ENCODE measurements at regions of chr14 and their contacts with region 1.

Region 1: GRCh38 chr14:22375321-22375930 is 213.6 kb downstream of the DAD1 start:
- DNase-seq: peak; percentile 21
- H3K4me3 ChIP-seq: no peak overlapping the region
- H3K27ac ChIP-seq: no peak overlapping the region
- H3K4me1 ChIP-seq: 0 out of 4 replicates have a peak, but pooled peaks cover 0 to 9% of the 10 kb centered on the region in 2 experiments
- H3K27me3 ChIP-seq: peaks cover 5% of the 10 kb centered on the region; the same call in 1 of the 2 replicates
- CTCF ChIP-seq: peak; percentile 71
- EP300 ChIP-seq: no peak
- RAD21 ChIP-seq: peak; percentile 49

Region 2: GRCh38 chr14:22314181-22314820 is 61.1 kb before region 1 on chr14:
- CTCF ChIA-PET with region 1: interaction called, 24 read pairs
- POLR2A ChIA-PET with region 1: no interaction called
- DNase-seq: peak; percentile 43
- H3K4me3 ChIP-seq: no peak overlapping the region
- H3K27ac ChIP-seq: no peak overlapping the region
- H3K4me1 ChIP-seq: no peaks in the 10 kb centered on the region
- H3K27me3 ChIP-seq: peaks cover 4% of the 10 kb centered on the region; the same call in 1 of the 2 replicates
- CTCF ChIP-seq: peak; percentile 75
- EP300 ChIP-seq: no peak
- RAD21 ChIP-seq: peak; percentile 61

Region 3: GRCh38 chr14:22319526-22320361 is 55.7 kb before region 1 on chr14:
- CTCF ChIA-PET with region 1: interaction called, 24 read pairs
- POLR2A ChIA-PET with region 1: no interaction called
- DNase-seq: peak; percentile 30
- H3K4me3 ChIP-seq: peak overlapping the region in 1 of 2 experiments; percentile 23; a peak in 1 of 4 replicates
- H3K27ac ChIP-seq: no peak overlapping the region
- H3K4me1 ChIP-seq: no peaks in the 10 kb centered on the region
- H3K27me3 ChIP-seq: peaks cover 12% of the 10 kb centered on the region; the same call in 1 of the 2 replicates
- CTCF ChIP-seq: peak; percentile 76
- EP300 ChIP-seq: no peak
- RAD21 ChIP-seq: peak; percentile 38

Region 4: DNA sequence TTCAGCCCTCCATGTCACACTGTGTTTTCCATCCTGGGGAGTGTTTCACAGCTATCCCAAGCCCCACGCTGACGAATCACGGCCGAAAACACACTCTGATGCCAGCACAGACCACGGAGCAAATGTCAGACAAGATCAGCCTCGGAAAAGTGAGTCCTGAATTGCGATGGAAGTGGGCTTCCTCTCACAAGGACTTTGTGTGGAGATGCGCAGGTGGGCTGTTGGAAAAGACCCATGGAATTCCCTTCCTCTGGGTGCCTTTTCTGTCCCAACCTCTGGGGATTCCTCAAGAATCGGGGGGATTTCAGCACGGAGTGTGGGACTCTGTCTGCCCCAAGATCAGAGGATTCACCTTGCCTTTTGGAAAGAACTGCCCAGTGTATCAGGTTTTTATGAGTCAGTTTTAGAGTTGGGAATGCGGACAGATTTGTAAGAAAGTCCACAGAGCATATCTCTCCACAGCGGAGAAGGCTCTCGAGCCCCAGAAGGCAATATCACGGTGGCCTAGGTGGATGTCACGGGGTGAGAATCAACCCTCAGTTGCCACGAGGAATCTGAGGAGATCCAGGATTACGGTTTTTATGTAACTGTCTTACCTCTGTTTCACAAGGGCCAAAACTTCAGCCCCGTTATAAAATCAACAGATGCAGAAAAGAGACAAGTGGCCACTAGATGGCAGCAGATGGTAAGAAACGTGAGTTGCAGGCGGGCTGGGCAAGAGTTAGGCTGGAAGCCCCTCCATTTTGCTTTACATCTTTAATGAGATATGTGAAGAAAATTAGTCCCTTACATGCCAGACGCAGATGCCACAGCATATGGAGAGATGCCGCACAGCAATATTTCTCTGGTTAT is 11.7 kb after region 1 on chr14:
- CTCF ChIA-PET with region 1: interaction called, 17 read pairs
- POLR2A ChIA-PET with region 1: no interaction called
- DNase-seq: peak; percentile 73
- H3K4me3 ChIP-seq: no peak overlapping the region; a peak in 1 of 4 replicates
- H3K27ac ChIP-seq: no peak overlapping the region
- H3K4me1 ChIP-seq: no peaks in the 10 kb centered on the region; a peak in 2 of 4 replicates
- H3K27me3 ChIP-seq: peaks cover 51% of the 10 kb centered on the region
- CTCF ChIP-seq: peak; percentile 88
- EP300 ChIP-seq: no peak
- RAD21 ChIP-seq: peak; percentile 91